ENCODE measurements at regions of chr4 and their contacts with region 1.

Region 1: GRCh38 chr4:48623182-48623780 is 133.2 kb downstream of the ZAR1 start:
- DNase-seq: no peak
- ATAC-seq: no peak
- H3K4me3 ChIP-seq: no peak overlapping the region
- H3K4me3 Mint-ChIP-seq: no peak overlapping the region
- H3K27ac ChIP-seq: no peak overlapping the region
- H3K27ac Mint-ChIP-seq: no peak overlapping the region
- H3K4me1 ChIP-seq: no peaks in the 10 kb centered on the region
- H3K4me1 Mint-ChIP-seq: no peaks in the 10 kb centered on the region
- H3K27me3 ChIP-seq: no peaks in the 10 kb centered on the region
- H3K27me3 Mint-ChIP-seq: no peaks in the 10 kb centered on the region
- CTCF ChIP-seq: no peak

Region 2: DNA sequence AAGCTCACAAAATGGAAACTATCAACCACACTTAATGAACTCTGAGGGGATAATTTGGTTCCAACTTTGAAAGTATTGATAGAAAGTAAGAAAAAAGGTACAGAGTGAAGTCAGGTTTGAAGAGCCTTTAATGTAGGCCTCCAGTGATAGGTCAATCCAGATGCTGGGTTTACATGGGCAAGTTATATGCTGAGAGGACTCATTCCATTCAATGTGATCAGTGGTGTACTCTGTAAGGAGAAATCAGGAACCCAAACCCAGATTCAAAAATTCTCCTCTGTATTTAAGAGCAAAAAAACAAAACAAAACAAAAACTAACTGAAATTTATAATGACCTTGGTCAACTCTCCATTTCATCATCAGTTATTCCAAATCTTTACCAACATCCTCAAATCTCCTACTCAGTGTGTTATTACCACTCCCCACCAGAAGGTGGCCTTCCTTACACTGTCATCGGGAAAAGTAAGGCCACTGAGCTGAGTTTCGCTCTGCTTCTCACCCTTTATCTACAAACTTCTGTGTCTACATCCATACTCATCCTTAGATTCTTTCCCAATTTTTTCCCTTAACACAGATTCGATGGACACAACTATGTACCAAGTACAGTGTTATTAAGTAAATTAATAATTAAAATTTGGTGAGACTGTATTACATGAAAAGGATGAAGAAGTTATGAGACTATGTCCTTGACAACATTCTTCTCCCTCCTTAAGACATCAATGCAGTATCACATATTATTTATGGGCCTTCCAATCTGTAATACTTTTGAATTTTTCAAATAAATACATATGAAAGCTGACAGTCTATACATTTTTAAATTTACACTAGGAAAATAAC is 44.9 kb before region 1 on chr4:
- CTCF ChIA-PET with region 1: no interaction called
- POLR2A ChIA-PET with region 1: no interaction called
- intact Hi-C with region 1: no loop called
- DNase-seq: peak; percentile 70
- ATAC-seq: peak; percentile 86
- H3K4me3 ChIP-seq: no peak overlapping the region
- H3K4me3 Mint-ChIP-seq: no peak overlapping the region
- H3K27ac ChIP-seq: peak overlapping the region in 1 of 2 donors; percentile 2
- H3K27ac Mint-ChIP-seq: no peak overlapping the region
- H3K4me1 ChIP-seq: no peaks in the 10 kb centered on the region
- H3K4me1 Mint-ChIP-seq: peaks cover 1% of the 10 kb centered on the region
- H3K27me3 ChIP-seq: no peaks in the 10 kb centered on the region
- H3K27me3 Mint-ChIP-seq: no peaks in the 10 kb centered on the region
- CTCF ChIP-seq: peak; percentile 94

Region 3: DNA sequence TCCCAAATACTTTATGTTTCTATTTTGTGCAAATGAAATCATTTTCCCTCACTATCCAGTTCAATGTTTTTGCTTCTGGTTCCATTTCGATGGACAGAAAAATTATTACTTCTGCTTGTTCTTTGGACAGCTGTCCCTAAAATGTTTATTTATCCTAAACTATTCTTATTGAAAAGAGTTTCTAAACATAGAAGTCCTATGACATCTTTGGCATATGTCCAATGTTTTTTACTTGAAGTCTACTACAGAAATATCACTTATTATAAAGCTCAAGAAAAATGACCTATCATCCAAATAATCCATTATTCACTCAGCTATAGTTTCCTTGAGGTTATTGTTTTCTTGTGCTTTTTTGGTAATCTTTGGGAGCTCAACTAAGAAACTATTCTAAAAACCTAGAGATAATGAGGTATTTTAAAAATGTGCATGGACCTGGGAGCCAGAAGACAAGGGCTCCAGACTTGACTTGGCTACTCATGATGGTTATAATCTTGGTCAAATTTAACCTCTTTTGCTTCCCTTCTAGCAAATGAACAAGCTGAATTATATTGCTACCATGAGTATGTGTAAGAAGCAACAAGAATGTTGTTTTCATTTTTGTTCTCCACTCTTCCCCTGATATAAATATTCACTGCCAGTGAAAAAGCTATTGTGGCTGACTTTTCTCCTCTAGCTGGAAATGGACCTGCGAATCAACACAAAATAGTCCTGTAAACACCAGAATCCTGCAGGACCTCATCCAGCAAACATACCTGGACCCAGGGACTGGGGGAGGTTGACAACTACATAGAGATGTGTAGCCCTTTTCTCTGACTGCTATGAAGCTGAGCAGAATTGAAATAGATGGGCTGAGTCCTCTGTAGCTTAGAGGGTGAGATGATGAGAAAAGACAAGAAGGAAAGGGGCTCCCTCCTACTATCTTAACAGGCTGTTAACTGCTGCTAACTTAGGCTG is 19.4 kb after region 1 on chr4:
- CTCF ChIA-PET with region 1: no interaction called
- POLR2A ChIA-PET with region 1: no interaction called
- intact Hi-C with region 1: loop called (anchors 2 kb)
- DNase-seq: no peak
- ATAC-seq: no peak
- H3K4me3 ChIP-seq: no peak overlapping the region
- H3K4me3 Mint-ChIP-seq: no peak overlapping the region
- H3K27ac ChIP-seq: peak overlapping the region in 1 of 2 donors; percentile 28
- H3K27ac Mint-ChIP-seq: no peak overlapping the region
- H3K4me1 ChIP-seq: no peaks in the 10 kb centered on the region
- H3K4me1 Mint-ChIP-seq: peaks cover 32% of the 10 kb centered on the region
- H3K27me3 ChIP-seq: no peaks in the 10 kb centered on the region
- H3K27me3 Mint-ChIP-seq: no peaks in the 10 kb centered on the region
- CTCF ChIP-seq: no peak